ENCODE measurements at regions of chr6 and their contacts with region 1.

Region 1: DNA sequence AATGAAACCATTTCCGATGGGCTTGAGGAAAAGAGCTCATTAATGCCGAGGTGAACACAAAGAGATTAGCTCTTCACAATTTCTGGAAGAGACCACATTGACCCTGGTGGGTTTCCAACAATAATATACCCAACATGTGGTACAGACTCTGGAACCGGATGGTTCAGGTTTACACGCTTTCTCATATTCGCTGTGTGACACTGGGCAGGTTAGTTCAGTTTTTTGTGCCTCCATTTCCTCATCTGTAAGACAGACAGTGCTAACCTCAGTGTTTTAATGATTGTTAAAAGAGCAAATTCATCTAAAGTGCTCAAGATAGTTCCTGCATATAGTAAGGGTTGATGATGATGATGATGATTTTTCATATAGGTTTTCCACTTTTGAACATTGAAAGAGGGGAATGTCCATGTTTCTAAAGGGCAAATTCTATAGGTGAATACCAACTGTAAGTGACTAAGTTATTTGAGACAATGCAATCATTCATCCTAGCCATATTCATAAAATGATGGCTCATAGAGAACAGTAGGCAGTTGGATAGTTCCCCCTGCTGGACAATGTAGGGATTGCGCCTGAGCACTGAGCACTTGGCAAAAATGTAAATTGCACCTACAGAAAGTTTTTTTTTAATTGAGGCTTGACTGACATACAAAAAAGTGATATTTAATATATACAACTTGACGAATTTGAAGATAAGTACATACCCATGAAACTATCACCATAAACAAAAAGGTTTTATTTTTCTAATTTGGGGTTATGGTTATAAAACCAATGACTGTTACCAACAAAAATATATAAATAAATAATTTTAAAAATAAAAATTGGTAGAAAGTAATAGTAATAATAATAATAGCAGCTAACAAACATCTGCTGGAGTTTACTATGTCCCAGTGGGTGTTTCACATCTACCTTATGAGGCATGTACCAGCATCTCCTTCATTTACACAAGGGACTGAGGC is 2.1 kb upstream of the PERP start:
- DNase-seq: peak; percentile 82
- ATAC-seq: no peak
- H3K4me3 ChIP-seq: peak overlapping the region; percentile 95; the same call in 1 of the 2 replicates
- H3K27ac ChIP-seq: peak overlapping the region; percentile 69
- H3K4me1 ChIP-seq: peaks cover 23% of the 10 kb centered on the region
- H3K27me3 ChIP-seq: no peaks in the 10 kb centered on the region
- CTCF ChIP-seq: peak; percentile 87

Region 2: DNA sequence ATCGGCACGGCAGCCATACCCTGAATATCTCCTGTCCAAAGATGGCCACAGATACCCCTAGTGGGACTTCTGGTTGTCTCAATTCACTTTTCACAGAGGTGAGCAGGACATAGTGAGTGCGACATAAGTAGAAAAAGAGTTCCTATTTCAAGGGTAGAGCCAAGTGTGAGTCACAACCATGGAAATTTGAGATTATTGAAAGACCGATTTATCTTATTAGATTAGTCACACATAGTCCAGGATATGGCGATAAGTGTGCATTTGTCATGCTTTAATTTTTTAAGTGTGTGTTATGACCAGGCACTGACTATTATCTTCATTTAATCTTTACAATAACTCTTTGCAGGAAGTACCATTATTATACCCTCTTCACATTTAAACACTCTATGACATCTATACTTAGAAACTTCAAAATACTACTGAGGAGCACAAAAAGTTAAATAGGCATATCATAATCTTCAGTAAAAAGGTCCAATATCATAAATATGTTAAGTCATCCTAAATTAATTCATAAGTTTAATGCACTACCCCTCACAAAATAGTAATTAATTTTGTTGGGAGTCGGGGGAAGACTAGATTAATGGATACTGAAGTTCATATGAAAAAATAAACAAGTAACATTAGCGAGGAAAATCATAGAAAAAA is 255.6 kb before region 1 on chr6:
- CTCF ChIA-PET with region 1: no interaction called
- POLR2A ChIA-PET with region 1: no interaction called
- intact Hi-C with region 1: loop called (anchors 10 kb)
- DNase-seq: peak; percentile 87
- ATAC-seq: peak; percentile 83
- H3K4me3 ChIP-seq: no peak overlapping the region
- H3K27ac ChIP-seq: peak overlapping the region; percentile 55
- H3K4me1 ChIP-seq: peaks cover 32% of the 10 kb centered on the region
- H3K27me3 ChIP-seq: no peaks in the 10 kb centered on the region
- CTCF ChIP-seq: no peak

Region 3: DNA sequence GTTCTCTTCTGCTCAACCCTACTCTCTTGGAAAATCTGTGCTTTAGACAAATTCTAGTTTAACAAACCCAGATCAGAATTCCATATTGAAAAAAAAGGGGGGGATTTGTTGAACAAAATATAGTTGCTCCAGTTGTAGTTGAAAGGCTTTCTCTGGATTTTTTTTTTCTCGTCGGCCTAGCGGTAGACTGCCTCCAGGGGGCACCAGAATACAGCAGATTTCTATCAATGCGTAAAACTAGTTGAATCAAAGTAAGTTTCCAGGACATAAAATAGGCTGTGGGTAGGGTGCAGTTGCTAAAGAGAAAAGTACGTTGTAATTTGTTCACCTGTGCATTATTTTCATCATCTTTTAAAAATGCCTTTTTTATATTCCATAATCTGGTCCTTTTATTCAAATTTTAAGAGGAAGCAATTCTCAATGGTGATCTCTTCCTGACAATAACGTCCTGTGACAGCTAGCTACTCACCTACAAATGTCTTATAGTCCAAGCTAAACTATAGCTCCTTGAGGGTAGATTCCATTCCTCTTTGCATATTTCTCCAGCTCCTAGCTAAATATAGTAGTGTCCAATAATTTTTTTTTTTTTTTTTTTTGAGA is 107.5 kb before region 1 on chr6:
- CTCF ChIA-PET with region 1: interaction called, 8 read pairs
- POLR2A ChIA-PET with region 1: no interaction called
- intact Hi-C with region 1: loop called (anchors 1 kb)
- DNase-seq: peak; percentile 69
- ATAC-seq: no peak
- H3K4me3 ChIP-seq: no peak overlapping the region
- H3K27ac ChIP-seq: no peak overlapping the region
- H3K4me1 ChIP-seq: peaks cover 5% of the 10 kb centered on the region
- H3K27me3 ChIP-seq: no peaks in the 10 kb centered on the region
- CTCF ChIP-seq: peak; percentile 86

Region 4: DNA sequence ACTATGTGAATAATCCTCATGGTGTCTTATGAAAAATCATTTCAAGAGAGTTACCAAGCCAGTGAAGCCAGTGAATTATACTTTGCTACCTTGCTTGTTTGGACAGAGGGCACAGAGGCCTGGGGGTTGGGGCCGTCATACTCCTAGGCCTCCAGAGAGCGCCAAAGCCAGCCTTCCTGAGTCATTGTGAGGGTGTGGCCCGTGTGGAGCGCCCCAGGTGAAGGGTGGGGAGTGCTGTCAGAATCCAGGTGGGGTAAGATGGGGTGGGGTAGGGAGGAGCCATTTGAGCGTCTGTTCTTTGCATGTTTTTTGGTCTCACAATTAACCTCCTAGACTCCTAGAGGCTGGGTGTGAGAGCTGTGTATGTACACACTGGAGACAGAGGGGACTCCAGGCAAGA is 73.2 kb before region 1 on chr6:
- CTCF ChIA-PET with region 1: no interaction called
- POLR2A ChIA-PET with region 1: no interaction called
- intact Hi-C with region 1: loop called (anchors 2 kb)
- DNase-seq: peak; percentile 81
- ATAC-seq: peak; percentile 78
- H3K4me3 ChIP-seq: no peak overlapping the region
- H3K27ac ChIP-seq: peak overlapping the region; percentile 97
- H3K4me1 ChIP-seq: peaks cover 29% of the 10 kb centered on the region
- H3K27me3 ChIP-seq: no peaks in the 10 kb centered on the region
- CTCF ChIP-seq: peak; percentile 25; the same call in 1 of the 2 replicates

Region 5: DNA sequence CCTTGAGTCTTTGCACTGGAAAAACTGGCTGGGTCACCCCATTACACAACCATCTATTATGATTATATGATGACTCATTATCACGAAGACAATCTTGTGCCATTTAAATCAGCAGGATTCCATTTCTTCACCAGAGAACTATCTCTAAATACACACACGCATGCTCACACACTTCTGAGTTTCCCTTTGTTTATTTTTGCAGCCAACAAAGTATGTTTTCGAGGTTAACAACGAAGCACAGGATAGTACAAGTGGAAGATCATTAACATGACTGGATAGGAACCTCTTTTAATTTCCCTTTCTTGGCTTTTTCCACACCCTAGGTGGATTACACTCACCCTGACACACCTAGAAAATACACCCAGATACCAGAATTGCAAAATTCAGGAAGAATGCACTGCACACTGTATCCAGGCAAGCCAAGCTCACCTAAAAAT is 21.0 kb before region 1 on chr6:
- CTCF ChIA-PET with region 1: no interaction called
- POLR2A ChIA-PET with region 1: interaction called, 4 read pairs
- intact Hi-C with region 1: loop called (anchors 1 kb)
- DNase-seq: peak; percentile 87
- ATAC-seq: peak; percentile 78
- H3K4me3 ChIP-seq: peak overlapping the region; percentile 48
- H3K27ac ChIP-seq: peak overlapping the region; percentile 74
- H3K4me1 ChIP-seq: peaks cover 36% of the 10 kb centered on the region
- H3K27me3 ChIP-seq: no peaks in the 10 kb centered on the region
- CTCF ChIP-seq: no peak

Region 6: DNA sequence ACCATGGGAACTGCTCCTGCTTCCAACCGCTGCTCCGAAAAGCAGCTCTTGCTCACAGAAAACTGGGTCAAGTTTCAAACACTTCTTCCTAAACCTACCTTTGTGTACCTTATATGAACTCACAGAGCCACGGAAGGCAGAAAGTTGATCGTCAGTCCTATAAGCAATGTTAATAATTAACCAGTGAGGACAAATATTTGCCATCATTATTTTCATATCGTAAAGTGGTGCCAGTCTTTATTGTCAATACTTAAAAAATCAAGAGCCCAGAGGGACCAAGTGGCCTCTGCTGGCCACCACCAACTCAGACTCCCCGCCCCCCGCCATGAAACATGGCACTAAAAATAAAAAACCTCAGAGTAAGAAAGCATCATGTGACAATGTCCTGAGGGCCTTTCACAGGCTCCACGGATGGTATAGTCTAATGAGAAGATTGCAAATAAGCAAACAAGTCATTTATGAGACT is 118.0 kb after region 1 on chr6:
- CTCF ChIA-PET with region 1: no interaction called
- POLR2A ChIA-PET with region 1: no interaction called
- intact Hi-C with region 1: no loop called
- DNase-seq: peak; percentile 37
- ATAC-seq: no peak
- H3K4me3 ChIP-seq: no peak overlapping the region
- H3K27ac ChIP-seq: peak overlapping the region; percentile 55
- H3K4me1 ChIP-seq: peaks cover 45% of the 10 kb centered on the region
- H3K27me3 ChIP-seq: no peaks in the 10 kb centered on the region
- CTCF ChIP-seq: no peak